ENCODE measurements at regions of chr11 and their contacts with region 1.

Region 1: DNA sequence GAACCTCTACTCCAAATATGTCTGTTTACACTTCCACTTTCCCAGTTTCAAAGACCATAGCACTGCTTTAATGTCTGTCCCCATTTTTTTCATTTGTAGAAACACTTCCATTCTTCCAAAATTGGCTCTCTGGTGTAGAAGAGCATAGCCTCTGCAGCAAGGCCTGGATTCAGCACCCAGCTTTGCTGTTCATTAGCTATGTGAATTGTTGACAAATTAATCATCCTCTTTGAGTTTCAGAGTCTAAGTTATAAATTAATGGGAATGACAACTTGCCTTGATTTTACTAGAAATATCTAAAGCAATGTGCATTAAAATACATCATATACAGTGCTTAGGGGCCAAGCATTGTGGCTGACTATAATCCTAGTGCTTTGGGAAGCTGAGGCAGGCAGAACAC is 22.4 kb downstream of the GRIA4 start:
- DNase-seq: no peak
- ATAC-seq: no peak
- H3K4me3 ChIP-seq: no peak overlapping the region
- H3K4me3 Mint-ChIP-seq: no peak overlapping the region
- H3K27ac ChIP-seq: no peak overlapping the region
- H3K27ac Mint-ChIP-seq: no peak overlapping the region
- H3K4me1 ChIP-seq: no peaks in the 10 kb centered on the region
- H3K4me1 Mint-ChIP-seq: no peaks in the 10 kb centered on the region
- H3K27me3 ChIP-seq: no peaks in the 10 kb centered on the region
- H3K27me3 Mint-ChIP-seq: peaks cover 0 to 2% of the 10 kb centered on the region in 2 donors

Region 2: GRCh38 chr11:105449100-105449734 is 183.1 kb before region 1 on chr11:
- CTCF ChIA-PET with region 1: no interaction called
- POLR2A ChIA-PET with region 1: no interaction called
- DNase-seq: no peak
- ATAC-seq: no peak
- H3K4me3 ChIP-seq: no peak overlapping the region
- H3K4me3 Mint-ChIP-seq: no peak overlapping the region
- H3K27ac ChIP-seq: no peak overlapping the region
- H3K27ac Mint-ChIP-seq: no peak overlapping the region
- H3K4me1 ChIP-seq: no peaks in the 10 kb centered on the region
- H3K4me1 Mint-ChIP-seq: no peaks in the 10 kb centered on the region
- H3K27me3 ChIP-seq: no peaks in the 10 kb centered on the region
- H3K27me3 Mint-ChIP-seq: peaks cover 0 to 3% of the 10 kb centered on the region in 2 donors

Region 3: GRCh38 chr11:105603156-105603555 is 29.2 kb before region 1 on chr11:
- CTCF ChIA-PET with region 1: interaction called in 1 of 2 experiments, 10 read pairs
- POLR2A ChIA-PET with region 1: no interaction called
- DNase-seq: no peak
- ATAC-seq: no peak
- H3K4me3 ChIP-seq: no peak overlapping the region
- H3K4me3 Mint-ChIP-seq: no peak overlapping the region
- H3K27ac ChIP-seq: no peak overlapping the region
- H3K27ac Mint-ChIP-seq: no peak overlapping the region
- H3K4me1 ChIP-seq: no peaks in the 10 kb centered on the region
- H3K4me1 Mint-ChIP-seq: no peaks in the 10 kb centered on the region
- H3K27me3 ChIP-seq: no peaks in the 10 kb centered on the region
- H3K27me3 Mint-ChIP-seq: peaks cover 4 to 21% of the 10 kb centered on the region in 2 donors

Measured in T-cell (primary cell).